K562 (cell line): ENCODE measurements at regions of chr1 and their contacts with region 1.

Region 1: DNA sequence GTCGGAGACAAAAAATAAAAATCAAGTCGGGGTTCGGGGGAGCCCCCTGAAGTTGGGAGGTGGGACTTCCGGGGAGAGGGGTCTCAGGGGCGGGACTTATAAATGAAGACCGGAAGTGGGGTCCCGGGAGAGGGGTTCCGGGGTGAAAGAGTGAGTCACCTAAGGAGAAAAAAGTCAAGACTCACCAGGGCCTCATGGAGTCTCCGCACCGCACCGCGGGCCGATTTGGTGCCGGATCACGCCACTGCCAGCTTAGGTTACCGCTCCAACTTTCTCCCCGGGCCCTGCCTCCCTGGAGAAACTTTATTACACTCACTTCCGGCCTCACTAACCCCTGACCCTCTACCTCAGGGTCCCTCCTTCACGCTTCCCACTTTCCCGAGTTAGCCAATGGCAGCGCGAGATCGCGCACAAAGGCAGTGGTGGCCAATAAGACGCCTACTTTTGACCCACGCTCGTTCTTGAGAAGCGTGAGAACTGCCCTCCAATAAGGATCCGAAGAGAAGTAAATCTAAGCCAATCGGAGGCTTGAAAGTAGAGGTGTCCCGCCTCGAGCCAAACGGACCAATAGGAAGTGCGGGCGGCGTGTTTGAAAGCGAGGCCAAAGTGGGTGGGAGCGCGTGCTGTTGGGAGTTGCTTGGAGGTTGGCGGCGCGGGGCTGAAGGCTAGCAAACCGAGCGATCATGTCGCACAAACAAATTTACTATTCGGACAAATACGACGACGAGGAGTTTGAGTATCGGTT is at the start of gene CKS1B:
- DNase-seq: peak; percentile 94 to 99 (median 97)
- ATAC-seq: peak; percentile 83
- H3K4me3 ChIP-seq: peak within 1 kb of the TSS; percentile 66
- H3K27ac ChIP-seq: peak within 1 kb of the TSS; percentile 99
- H3K4me1 ChIP-seq: peaks cover 45 to 50% of the 10 kb centered on the region in 2 experiments
- H3K27me3 ChIP-seq: no peaks in the 10 kb centered on the region; a peak in 1 of 5 replicates
- CTCF ChIP-seq: no peak
- EP300 ChIP-seq: no peak; the same call in 1 of the 2 replicates
- POLR2A ChIP-seq: peak; percentile 97
- RAD21 ChIP-seq: no peak
- polyA plus RNA-seq, gene CKS1B: 1,039 to 1,103 TPM

Region 2: DNA sequence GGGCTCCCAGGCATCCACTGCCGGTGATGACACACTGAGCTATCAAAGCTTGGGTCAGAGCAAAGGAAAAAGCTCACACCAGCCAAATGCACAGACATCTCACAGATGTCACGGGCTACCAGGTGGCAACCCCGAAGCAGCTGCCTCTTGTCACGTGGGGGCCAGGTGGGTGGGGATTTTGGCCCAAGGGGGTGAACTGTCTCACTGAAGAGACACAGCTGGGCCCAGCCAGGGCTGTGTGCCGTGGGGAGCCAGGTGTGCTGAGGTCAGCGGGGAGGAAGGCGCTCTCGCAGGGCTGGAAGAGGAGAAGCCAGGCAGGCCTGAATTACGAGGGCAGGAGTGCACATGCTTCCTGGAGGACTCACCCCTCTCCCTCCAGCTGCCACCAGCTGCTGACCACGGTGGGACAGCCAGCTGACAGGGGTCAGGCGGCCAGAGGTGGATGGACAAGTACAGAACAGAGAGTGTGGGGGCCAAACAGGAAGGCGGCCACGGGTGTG is 136.5 kb before region 1 on chr1:
- CTCF ChIA-PET with region 1: no interaction called
- POLR2A ChIA-PET with region 1: no interaction called
- in situ Hi-C with region 1: no loop called
- intact Hi-C with region 1: no loop called
- DNase-seq: no peak
- ATAC-seq: no peak
- H3K4me3 ChIP-seq: no peak overlapping the region
- H3K27ac ChIP-seq: no peak overlapping the region
- H3K4me1 ChIP-seq: peaks cover 0 to 8% of the 10 kb centered on the region in 2 experiments; a peak in 2 of 5 replicates
- H3K27me3 ChIP-seq: peaks cover 55 to 77% of the 10 kb centered on the region in 2 experiments
- CTCF ChIP-seq: no peak
- EP300 ChIP-seq: no peak
- POLR2A ChIP-seq: no peak
- RAD21 ChIP-seq: no peak

Region 3: GRCh38 chr1:154955718-154956543 is 18.3 kb before region 1 on chr1 and contains the start of gene PBXIP1:
- CTCF ChIA-PET with region 1: no interaction called
- POLR2A ChIA-PET with region 1: interaction called, 80 read pairs
- in situ Hi-C with region 1: no loop called
- intact Hi-C with region 1: no loop called
- DNase-seq: peak; percentile 85 to 97 (median 89)
- ATAC-seq: peak; percentile 88
- H3K4me3 ChIP-seq: peak within 1 kb of the TSS; percentile 50
- H3K27ac ChIP-seq: peak within 1 kb of the TSS; percentile 63
- H3K4me1 ChIP-seq: peaks cover 31 to 47% of the 10 kb centered on the region in 2 experiments
- H3K27me3 ChIP-seq: no peaks in the 10 kb centered on the region
- CTCF ChIP-seq: peak; percentile 45 to 58 (median 46); a peak in 5 of 6 replicates
- EP300 ChIP-seq: no peak
- POLR2A ChIP-seq: no peak
- RAD21 ChIP-seq: peak; percentile 23 to 40; a peak in 2 of 4 replicates
- polyA plus RNA-seq, gene PBXIP1: 0.13 to 0.22 TPM

Region 4: DNA sequence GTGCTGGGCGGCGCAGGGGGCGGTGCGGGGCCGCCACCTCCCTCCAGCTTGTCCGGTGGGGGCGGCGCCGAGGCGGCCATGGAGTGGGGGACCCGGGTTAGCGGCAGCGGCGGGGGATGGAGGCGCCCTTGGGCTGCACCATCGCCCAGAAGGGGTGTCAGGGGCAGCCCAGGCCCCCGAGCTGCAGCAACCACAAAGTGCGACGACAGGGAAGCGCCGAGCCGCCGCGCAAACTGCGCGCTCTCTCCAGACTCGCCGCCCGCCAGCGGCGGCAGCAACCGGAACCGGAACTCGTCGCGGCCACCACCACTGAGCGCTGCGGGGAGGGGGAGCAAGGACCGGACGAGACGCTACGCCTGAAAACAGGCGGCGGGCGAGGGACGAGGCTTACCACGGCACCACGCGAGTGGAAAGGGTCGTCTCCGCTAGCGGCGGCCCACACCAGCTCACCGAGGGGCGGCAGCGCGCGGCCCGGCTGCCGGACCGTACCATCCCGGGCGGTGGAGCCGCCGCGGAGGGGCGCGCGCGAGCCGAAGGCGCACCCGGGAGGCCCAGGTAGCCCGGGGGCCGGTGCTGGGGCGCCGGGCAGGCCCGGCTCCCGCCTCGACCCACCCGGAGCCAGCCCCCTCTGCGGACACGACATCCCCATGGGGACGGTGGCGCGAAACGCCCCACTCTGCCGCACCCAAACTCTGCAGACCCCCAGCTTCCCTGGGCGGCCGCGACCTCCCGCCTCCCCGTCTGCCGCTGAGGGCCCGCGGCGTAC is 12.6 kb before region 1 on chr1 and contains the start of gene PYGO2:
- CTCF ChIA-PET with region 1: no interaction called
- POLR2A ChIA-PET with region 1: interaction called, 80 read pairs
- in situ Hi-C with region 1: no loop called
- intact Hi-C with region 1: no loop called
- DNase-seq: peak; percentile 86 to 93 (median 90)
- ATAC-seq: peak; percentile 91
- H3K4me3 ChIP-seq: peak within 1 kb of the TSS; percentile 91
- H3K27ac ChIP-seq: peak within 1 kb of the TSS; percentile 99
- H3K4me1 ChIP-seq: peaks cover 25 to 53% of the 10 kb centered on the region in 2 experiments
- H3K27me3 ChIP-seq: no peaks in the 10 kb centered on the region
- CTCF ChIP-seq: peak; percentile 64 to 86 (median 70)
- EP300 ChIP-seq: no peak
- POLR2A ChIP-seq: peak; percentile 92
- RAD21 ChIP-seq: peak; percentile 74 to 80
- polyA plus RNA-seq, gene PYGO2: 8.3 to 8.6 TPM

Region 5: GRCh38 chr1:154992721-154993571 is 18.7 kb after region 1 on chr1:
- CTCF ChIA-PET with region 1: interaction called, 4 read pairs
- POLR2A ChIA-PET with region 1: interaction called, 39 read pairs
- in situ Hi-C with region 1: no loop called
- intact Hi-C with region 1: no loop called
- DNase-seq: peak; percentile 63 to 88 (median 72)
- ATAC-seq: peak; percentile 85
- H3K4me3 ChIP-seq: no peak overlapping the region
- H3K27ac ChIP-seq: peak overlapping the region; percentile 73; the same call in 2 of the 3 replicates
- H3K4me1 ChIP-seq: peaks cover 35 to 40% of the 10 kb centered on the region in 2 experiments
- H3K27me3 ChIP-seq: no peaks in the 10 kb centered on the region
- CTCF ChIP-seq: peak in 2 of 3 experiments; percentile 7 to 13; a peak in 1 of 6 replicates
- EP300 ChIP-seq: peak; percentile 18; the same call in 1 of the 2 replicates
- POLR2A ChIP-seq: peak; percentile 39; the same call in 1 of the 2 replicates
- RAD21 ChIP-seq: no peak

Region 6: DNA sequence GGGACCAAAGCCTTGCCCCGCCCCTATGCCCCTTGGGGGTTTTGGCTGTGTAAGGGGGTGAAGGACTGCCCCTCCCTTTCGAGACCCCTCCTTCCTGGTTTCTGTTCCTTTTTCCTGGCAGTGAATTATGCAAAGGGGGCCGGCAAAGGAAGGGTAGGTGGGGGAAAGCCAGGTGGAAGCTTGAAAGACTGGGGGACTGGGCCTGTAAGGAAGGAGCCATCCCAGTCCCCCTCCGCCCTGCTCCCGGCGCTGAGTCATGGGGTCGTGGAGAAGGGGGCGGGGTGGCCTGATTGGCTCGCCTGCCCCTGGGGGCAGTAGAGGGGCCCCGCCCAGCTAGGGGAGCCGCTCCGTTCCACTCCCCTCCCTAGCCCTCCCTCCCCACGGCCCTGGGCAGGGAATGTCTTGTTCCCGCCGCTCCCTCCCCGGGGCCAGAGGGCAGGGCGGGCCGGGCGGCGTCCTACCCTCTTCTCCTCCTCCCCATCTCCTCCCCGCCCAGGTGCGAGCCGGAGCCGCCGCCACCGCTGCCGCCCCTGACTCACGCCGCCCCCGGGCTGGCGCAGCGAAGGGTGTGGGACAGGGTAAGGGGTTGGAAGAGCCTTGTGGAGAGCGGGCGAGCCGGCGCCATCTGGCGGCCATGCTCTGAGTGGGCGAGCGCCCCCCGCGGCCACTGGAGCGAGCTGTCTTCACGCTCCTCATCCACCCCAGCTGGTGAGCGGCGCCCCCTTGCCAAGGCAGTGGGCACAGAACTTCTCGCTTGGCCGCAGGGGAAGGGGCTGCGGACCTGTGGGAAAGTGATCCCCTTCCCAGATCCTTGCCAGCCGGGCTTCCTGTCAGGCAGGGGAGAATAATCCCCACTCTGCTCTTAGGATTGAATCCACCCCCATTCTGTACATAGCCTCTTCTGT is 43.1 kb after region 1 on chr1:
- CTCF ChIA-PET with region 1: interaction called, 11 read pairs
- POLR2A ChIA-PET with region 1: interaction called, 15 read pairs
- in situ Hi-C with region 1: no loop called
- intact Hi-C with region 1: no loop called
- DNase-seq: peak; percentile 90 to 96 (median 91)
- ATAC-seq: peak; percentile 93
- H3K4me3 ChIP-seq: peak overlapping the region; percentile 31
- H3K27ac ChIP-seq: peak overlapping the region; percentile 81
- H3K4me1 ChIP-seq: peaks cover 28 to 57% of the 10 kb centered on the region in 2 experiments
- H3K27me3 ChIP-seq: no peaks in the 10 kb centered on the region
- CTCF ChIP-seq: peak; percentile 100
- EP300 ChIP-seq: no peak
- POLR2A ChIP-seq: peak; percentile 63
- RAD21 ChIP-seq: peak; percentile 92 to 96

Region 7: DNA sequence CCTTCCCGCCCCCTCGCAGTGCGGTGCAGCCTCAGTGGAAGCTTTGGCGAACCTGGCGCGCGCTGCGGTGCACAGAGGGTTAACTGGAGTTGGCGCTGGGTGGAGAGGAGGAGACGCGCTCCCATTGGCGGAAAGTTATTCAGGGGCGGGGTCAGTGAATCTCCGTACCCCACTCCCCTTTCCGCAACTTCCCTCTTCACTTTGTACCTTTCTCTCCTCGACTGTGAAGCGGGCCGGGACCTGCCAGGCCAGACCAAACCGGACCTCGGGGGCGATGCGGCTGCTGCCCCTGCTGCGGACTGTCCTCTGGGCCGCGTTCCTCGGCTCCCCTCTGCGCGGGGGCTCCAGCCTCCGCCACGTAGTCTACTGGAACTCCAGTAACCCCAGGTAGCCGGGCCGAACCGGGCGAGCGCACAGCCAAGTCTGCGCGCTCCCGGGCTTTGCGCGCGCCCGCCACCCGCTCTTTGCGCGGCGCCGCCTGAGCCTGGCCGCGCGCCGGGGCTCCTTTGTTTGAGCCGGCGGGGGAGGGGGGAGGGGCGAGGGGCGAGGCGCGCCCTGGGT is 89.4 kb after region 1 on chr1 and contains the start of gene EFNA4:
- CTCF ChIA-PET with region 1: interaction called, 3 read pairs
- POLR2A ChIA-PET with region 1: interaction called, 3 read pairs
- in situ Hi-C with region 1: no loop called
- intact Hi-C with region 1: loop called (anchors 5 kb)
- DNase-seq: peak; percentile 91 to 93 (median 92)
- ATAC-seq: peak; percentile 91
- H3K4me3 ChIP-seq: peak within 1 kb of the TSS; percentile 58
- H3K27ac ChIP-seq: peak within 1 kb of the TSS; percentile 45; the same call in 2 of the 3 replicates
- H3K4me1 ChIP-seq: peaks cover 27 to 58% of the 10 kb centered on the region in 2 experiments
- H3K27me3 ChIP-seq: no peaks in the 10 kb centered on the region
- CTCF ChIP-seq: no peak
- EP300 ChIP-seq: no peak
- POLR2A ChIP-seq: peak; percentile 71
- RAD21 ChIP-seq: no peak
- polyA plus RNA-seq, gene EFNA4: 0.68 to 0.89 TPM